ENCODE measurements at regions of chr20 and their contacts with region 1.

Region 1: DNA sequence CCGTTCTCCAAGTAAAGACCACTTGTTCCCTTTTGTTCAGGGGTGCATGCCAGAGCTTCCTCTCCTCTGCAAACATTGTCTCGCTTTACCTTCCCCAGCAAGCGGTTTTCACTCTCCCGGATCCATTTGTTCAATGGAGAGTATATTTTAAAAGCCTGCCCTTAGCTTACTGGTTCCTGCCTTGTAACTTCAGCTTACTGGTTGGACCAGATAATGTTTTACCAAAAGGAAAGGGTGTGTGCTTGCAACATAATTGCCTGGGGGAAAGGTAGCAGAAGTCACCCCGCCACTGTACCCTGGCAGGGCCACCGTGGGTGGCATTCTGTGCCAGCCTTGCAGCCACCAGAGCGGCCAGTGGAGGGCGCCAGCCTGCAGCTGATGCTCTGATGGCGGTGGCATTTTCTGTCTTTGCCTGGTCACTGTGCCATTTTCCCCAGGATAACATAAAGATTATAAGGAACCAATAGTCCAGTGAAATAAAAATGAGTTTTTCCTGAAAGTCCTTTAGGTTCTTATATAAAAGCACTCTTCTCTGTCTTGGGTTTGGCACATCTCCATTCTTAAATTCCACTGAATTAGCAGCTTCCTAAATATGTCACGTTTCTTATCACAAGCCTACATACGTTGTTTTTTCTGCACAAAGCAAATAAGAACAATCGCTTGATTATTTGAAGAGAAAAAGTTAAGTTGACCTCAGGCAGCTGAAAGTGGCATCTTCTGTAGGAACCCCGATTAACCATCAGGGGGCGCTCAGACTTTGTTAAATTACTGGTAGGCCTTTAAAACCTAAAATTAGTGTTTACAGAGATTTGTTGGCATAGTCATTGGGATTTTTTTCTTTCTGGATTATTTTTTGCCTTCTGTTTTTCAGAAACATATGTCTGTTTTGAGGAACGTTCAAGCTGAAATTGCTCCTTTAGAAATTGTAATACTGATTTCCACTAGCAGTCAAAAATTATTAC is 67.4 kb upstream of the XRN2 start:
- DNase-seq: no peak
- H3K4me3 ChIP-seq: no peak overlapping the region
- CTCF ChIP-seq: peak; percentile 97

Region 2: DNA sequence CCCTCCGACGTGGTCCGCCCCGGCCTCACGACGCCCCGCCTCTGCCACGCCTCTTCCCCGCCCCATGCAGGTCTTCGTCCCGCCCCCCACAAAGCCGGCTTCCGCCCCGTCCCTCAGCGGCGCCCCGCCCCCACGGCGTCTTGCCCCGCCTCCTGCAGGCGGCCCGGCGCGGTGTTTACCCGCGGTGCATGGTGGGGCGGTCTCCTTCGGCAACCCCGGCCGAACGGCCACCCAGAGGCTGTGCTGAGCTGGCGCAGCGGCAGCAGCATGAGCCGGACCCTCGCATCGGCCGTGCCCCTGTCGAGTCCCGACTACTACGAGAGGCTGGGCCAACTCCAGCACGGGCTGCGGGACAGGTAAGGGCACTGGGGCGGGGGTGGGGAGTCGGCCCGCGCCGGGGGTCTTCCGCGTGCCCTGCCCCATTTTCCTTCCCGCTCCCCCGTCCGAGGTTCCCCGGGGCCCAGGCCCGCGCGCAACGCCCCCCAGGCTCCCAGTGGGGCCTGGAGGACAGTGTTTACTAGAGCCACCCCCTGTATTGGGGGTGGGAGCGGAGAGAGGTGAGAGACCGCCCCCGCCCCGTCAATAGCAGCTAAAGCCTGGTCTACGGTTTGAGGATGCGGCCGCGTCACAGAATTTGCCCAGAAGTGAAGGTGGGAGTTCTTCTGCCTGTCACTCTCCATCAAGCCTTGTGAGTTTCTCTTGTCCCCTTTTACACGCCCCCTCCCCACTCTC is 109.8 kb before region 1 on chr20 and contains the start of gene KIZ:
- CTCF ChIA-PET with region 1: interaction called, 19 read pairs
- POLR2A ChIA-PET with region 1: no interaction called
- DNase-seq: no peak
- H3K4me3 ChIP-seq: peak within 1 kb of the TSS; percentile 81
- CTCF ChIP-seq: peak; percentile 51

Region 3: DNA sequence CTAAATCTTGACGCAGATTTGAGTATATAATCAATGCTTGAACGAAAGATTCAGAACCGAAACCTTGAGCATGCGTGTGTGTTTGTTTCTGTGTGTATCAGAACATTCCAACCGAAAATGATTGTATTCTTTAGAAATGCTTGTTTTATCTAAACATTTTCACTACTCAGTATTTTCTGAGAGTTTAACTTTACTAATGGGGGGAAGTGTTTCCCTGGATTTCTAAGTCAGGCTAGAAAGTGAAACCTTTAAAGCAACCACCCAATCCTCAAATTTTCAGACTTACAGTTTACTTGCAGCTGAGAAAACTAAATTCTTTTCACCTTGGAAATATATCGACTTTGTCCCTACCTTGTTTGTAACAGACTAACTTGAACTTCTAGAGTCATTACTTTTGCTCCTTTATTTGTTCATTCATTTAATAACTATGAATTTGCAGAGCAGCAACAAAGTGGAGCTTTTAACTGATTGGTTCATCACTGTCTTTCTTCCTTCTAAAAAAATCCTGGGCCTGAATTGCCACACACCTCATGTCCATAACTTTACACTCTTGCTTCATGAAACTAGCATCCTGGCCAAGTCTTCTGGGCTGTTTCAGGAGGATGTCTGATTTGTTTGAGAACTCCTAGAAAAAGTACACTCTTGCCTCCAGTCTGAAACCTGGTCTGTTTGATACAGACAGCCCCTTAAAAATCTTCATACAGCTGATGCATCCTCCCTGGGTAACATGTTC is 10.4 kb before region 1 on chr20:
- CTCF ChIA-PET with region 1: interaction called, 33 read pairs
- POLR2A ChIA-PET with region 1: no interaction called
- DNase-seq: no peak
- H3K4me3 ChIP-seq: no peak overlapping the region
- CTCF ChIP-seq: no peak

Region 4: GRCh38 chr20:21342656-21343345 is 107.0 kb after region 1 on chr20:
- CTCF ChIA-PET with region 1: interaction called, 11 read pairs
- POLR2A ChIA-PET with region 1: no interaction called
- DNase-seq: no peak
- H3K4me3 ChIP-seq: no peak overlapping the region
- CTCF ChIP-seq: no peak

Region 5: GRCh38 chr20:21388566-21388965 is 152.8 kb after region 1 on chr20:
- CTCF ChIA-PET with region 1: interaction called, 18 read pairs
- POLR2A ChIA-PET with region 1: no interaction called
- DNase-seq: no peak
- H3K4me3 ChIP-seq: no peak overlapping the region
- CTCF ChIP-seq: no peak

Region 6: DNA sequence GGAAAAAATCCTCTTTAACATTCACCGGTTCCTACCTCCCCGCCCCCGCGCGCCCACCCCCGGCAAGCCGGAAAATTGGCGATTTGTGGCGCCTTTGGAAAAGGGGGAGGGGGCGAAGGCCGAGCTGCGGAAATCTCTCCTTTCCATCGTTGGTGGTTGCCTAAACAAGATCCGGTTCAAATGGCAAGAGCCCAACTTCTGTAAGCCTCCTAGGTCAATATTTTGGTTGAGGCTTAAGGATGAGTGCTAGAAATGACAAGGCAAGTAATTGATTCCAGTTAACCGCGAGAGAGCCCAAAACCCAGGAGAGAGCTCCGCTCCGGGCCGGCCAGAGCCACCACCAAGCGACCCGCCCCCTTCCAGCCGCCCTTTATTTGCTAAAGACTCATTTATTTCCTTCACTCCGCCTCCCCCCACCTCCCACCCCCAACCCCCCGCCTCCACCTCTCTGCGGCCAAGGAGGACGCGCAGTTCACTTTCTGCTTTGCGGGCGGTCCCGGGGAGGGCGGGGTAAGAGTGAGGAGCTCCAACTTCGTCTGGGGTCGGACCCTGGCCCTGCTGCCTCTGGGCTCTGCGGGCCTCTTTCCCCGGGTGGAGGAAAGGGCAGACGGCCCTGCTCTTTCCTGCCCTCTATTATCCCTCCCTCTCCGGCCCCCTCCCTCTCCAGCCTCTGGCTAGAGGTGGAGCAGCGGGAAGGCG is 278.9 kb after region 1 on chr20:
- CTCF ChIA-PET with region 1: interaction called, 374 read pairs
- POLR2A ChIA-PET with region 1: no interaction called
- DNase-seq: no peak
- H3K4me3 ChIP-seq: no peak overlapping the region
- CTCF ChIP-seq: no peak

Measured in AG04449 (cell line).